ENCODE measurements at regions of chr7 and their contacts with region 1.

Region 1: DNA sequence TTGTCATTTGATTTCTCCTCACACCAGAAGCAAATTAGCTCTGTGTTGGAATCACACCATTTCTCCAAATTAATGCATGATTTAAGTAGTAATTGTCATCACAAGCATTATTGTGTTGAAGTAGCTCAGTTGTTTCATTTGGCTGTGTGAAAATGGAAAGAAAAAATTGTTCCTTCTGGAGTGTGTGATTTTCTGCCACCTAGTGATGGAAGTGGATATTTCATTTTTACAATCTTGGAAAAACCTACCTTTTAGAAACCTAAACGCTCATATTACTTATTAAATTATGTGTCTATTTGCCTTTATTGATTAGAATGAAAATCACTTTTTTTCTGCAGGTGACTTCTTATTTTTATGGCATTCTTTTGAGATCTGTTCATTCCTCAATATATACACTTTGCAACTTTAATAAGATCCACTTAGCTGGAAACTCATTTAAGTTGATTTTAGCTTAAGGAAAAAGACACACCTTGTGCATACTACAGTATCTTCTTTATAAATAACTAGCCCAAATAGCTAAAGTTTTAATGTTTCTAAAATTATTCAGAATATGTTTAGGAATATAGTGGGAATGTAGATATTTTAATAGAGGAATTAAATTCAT is 50.0 kb downstream of the SRI start:
- DNase-seq: no peak
- H3K4me3 ChIP-seq: no peak overlapping the region
- H3K27ac ChIP-seq: no peak overlapping the region
- H3K27me3 ChIP-seq: no peaks in the 10 kb centered on the region
- CTCF ChIP-seq: peak; percentile 61

Region 2: DNA sequence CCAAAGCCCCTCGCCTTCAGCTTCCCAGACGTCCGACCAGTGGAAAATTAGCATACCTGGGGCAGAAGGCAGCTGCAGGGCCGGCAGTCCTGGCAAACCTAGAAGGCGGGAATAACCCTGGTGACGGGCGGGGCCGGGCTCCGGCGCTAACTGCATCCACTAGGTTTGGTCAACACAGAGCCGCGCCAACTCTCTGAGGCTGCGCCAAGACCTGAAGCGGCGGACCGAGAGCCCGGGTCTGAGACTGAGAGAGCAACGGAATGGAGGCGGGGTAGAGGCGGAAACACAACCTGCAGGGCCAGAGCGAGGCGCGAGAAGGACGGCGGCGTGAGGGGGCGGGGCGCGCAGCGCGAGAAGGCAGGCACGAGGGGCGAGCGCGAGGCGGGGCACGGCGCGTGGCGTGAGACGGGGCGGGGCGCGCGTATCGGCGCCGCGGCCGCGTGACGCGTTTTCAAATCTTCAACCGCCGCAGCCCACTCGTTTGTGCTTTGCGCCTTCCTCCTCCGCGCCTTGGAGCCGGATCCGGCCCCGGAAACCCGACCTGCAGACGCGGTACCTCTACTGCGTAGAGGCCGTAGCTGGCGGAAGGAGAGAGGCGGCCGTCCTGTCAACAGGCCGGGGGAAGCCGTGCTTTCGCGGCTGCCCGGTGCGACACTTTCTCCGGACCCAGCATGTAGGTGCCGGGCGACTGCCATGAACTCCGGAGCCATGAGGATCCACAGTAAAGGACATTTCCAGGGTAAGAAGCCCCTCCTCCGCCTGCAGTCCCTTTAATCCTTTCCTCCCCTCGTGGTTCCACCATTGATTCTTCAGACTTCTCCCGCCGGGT is 293.6 kb before region 1 on chr7 and contains the starts of genes DBF4 and SLC25A40:
- CTCF ChIA-PET with region 1: no interaction called
- POLR2A ChIA-PET with region 1: no interaction called
- DNase-seq: peak; percentile 78
- H3K4me3 ChIP-seq: peak within 1 kb of the TSS; percentile 85
- H3K27ac ChIP-seq: peak within 1 kb of the TSS; percentile 94
- H3K27me3 ChIP-seq: no peaks in the 10 kb centered on the region
- CTCF ChIP-seq: no peak
- polyA plus RNA-seq, gene DBF4: 6.8 and 8.8 TPM in 2 replicates
- polyA plus RNA-seq, gene SLC25A40: 9.3 and 11.8 TPM in 2 replicates

Region 3: GRCh38 chr7:88184848-88185304 is 15.1 kb after region 1 on chr7:
- CTCF ChIA-PET with region 1: interaction called, 12 read pairs
- POLR2A ChIA-PET with region 1: no interaction called
- DNase-seq: no peak
- H3K4me3 ChIP-seq: no peak overlapping the region
- H3K27ac ChIP-seq: no peak overlapping the region
- H3K27me3 ChIP-seq: no peaks in the 10 kb centered on the region
- CTCF ChIP-seq: no peak

Region 4: GRCh38 chr7:88200789-88201188 is 31.0 kb after region 1 on chr7:
- CTCF ChIA-PET with region 1: interaction called, 11 read pairs
- POLR2A ChIA-PET with region 1: no interaction called
- DNase-seq: no peak
- H3K4me3 ChIP-seq: no peak overlapping the region
- H3K27ac ChIP-seq: no peak overlapping the region
- H3K27me3 ChIP-seq: no peaks in the 10 kb centered on the region
- CTCF ChIP-seq: no peak

Region 5: GRCh38 chr7:88401007-88401623 is 231.3 kb after region 1 on chr7:
- CTCF ChIA-PET with region 1: no interaction called
- POLR2A ChIA-PET with region 1: no interaction called
- DNase-seq: no peak
- H3K4me3 ChIP-seq: no peak overlapping the region
- H3K27ac ChIP-seq: no peak overlapping the region
- H3K27me3 ChIP-seq: no peaks in the 10 kb centered on the region
- CTCF ChIP-seq: no peak